Gastrocnemius medialis (tissue), 4 donors: ENCODE measurements at regions of chr12 and their contacts with region 1.

Region 1: DNA sequence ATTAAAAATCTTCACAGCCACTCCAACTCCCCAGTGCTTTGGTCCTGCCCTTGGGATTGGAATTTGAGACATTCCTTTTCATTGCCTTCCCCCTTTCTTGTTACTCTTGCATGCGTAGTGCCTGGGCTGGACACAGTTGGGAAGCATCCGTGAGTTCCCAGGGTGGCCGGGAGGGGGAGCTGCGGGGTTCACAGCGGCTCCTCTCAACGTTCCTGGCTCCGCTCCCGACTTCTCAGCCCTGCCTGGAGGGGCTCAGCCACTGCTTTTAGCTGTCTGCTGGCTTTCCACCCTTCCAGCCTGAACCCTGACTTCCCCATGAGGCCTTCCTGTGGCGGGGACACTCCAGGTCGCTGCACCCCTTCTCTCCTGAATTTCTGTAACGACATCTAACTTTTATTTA is 3.2 kb downstream of the TEX52 start:
- DNase-seq: peak; percentile 53 to 72
- ATAC-seq: peak; percentile 51 to 70
- H3K4me3 ChIP-seq: no peak overlapping the region
- H3K27ac ChIP-seq: no peak overlapping the region
- H3K4me1 ChIP-seq: peaks cover 5 to 12% of the 10 kb centered on the region in 2 donors
- H3K27me3 ChIP-seq: no peaks in the 10 kb centered on the region
- CTCF ChIP-seq: peak; percentile 71 to 90 (median 77)
- POLR2A ChIP-seq: no peak

Region 2: DNA sequence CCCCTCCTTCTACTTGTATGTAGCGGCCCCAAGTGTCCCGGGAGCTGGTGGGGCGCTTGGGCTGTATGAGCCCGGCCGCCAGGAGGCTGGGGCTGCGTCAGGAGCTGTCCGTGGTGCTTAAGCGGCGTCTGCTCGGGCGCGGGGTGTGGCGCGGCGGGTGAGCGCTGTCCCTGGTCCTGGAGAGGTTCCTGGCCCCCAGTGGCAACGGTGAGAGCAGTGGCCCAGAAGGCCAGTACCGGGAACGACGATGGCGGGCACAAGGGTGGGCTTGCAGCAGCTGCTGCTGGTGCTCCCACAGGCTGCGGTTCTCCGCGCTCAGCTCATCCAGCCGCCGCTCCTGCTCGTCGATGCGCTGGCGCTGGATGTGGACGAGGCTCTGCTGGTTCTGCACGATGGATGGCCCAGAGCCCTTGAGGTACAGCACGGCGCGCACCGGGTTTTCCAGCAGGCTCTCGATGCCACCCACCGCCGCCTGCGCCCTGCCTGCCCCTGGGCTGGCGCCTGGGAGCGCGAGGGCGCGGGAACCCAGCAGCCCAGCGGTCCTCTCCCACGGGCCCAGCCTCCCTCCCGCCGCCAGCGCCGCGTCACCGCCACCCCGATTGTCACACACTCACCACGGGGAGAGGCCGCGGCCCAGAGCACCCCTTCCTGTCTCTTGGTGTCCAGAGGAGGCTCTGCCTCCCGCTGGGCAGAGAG is 100.8 kb before region 1 on chr12:
- in situ Hi-C with region 1: no loop called
- intact Hi-C with region 1: no loop called
- DNase-seq: peak; percentile 10 to 23
- ATAC-seq: peak; percentile 30 to 41
- H3K4me3 ChIP-seq: no peak overlapping the region
- H3K27ac ChIP-seq: no peak overlapping the region
- H3K4me1 ChIP-seq: no peaks in the 10 kb centered on the region
- H3K27me3 ChIP-seq: no peaks in the 10 kb centered on the region
- CTCF ChIP-seq: no peak
- POLR2A ChIP-seq: no peak

Region 3: DNA sequence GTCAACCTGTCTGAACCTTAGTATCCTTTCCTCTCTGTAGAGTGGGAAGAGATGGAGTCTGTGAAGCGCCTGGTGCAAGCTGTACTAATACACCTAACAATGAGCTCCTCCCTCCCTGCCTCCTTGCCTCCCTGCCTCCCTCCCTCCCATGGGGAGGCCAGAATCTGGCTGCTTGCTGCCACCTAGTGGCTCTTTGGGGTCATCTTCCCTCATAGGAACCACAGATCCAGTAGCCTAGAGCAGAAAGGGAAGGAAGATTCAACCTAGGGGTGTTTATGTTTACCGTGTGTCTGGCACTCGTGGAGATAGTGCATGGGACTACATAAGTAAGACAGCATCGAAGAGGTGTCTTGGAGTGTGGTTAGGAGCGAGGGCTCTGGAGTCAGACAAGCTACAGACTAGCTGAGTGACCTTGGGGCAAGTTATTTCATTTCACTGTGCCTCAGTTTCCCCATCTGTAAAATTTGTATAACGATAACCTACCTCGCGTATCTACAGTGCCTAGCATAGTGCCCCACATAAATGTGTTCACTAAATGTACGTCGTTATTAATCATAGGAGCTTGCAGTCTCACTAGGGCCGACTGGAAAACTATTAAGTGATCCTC is 188.0 kb after region 1 on chr12:
- in situ Hi-C with region 1: loop called in 1 of 4 experiments (anchors 10 kb)
- intact Hi-C with region 1: loop called (anchors 10 kb)
- DNase-seq: peak in 1 of 2 donors; percentile 69
- ATAC-seq: peak; percentile 57 to 67
- H3K4me3 ChIP-seq: no peak overlapping the region
- H3K27ac ChIP-seq: peak overlapping the region in 3 of 4 donors; percentile 4 to 62 (median 39)
- H3K4me1 ChIP-seq: peaks cover 20 to 35% of the 10 kb centered on the region in 2 donors
- H3K27me3 ChIP-seq: no peaks in the 10 kb centered on the region
- CTCF ChIP-seq: peak; percentile 48 to 79 (median 64)
- POLR2A ChIP-seq: no peak